Psoas muscle (tissue), 8 donors: ENCODE measurements at regions of chr22 and their contacts with region 1.

Region 1: GRCh38 chr22:28917747-28918549 is 34.6 kb downstream of the ZNRF3 start:
- DNase-seq: no peak
- ATAC-seq: peak; percentile 71 to 81 (median 74)
- H3K4me3 ChIP-seq: peak overlapping the region; percentile 28
- H3K27ac ChIP-seq: peak overlapping the region; percentile 74
- H3K4me1 ChIP-seq: peaks cover 25% of the 10 kb centered on the region
- H3K27me3 ChIP-seq: no peaks in the 10 kb centered on the region
- CTCF ChIP-seq: no peak

Region 2: DNA sequence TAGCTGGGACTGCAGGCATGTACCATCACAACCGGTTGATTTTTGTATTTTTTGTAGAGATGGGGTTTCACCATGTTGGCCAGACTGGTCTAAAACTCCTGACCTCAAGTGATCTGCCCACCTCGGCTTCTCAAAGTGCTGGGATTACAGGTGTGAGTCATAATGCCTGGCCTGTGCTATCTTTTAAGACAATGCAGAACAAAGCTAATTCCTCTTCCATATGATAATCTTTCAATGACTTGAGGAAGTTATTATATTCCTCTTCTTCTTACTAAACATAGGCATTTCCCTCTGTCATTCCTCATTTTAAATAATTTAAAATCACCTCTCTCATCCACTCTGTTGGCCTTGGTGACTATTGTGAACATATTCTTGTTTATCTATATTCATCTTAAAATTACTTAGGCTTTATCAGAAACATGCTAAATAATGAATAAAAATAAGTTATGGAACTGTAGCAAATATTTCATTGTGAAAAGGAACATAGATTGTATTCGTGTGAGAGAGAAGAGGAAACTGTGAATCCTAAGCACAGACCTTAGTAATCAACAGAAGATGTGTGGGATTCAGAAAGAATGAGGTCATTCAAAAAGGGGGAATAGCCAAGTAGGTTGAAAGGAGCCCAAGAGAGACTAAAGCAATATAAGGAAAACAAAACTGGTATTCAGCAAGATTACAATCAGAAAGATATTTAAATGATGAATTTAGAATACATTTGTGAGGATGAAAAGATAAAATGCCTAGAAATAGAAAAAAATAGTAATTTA is 507.7 kb before region 1 on chr22:
- intact Hi-C with region 1: no loop called
- DNase-seq: no peak
- ATAC-seq: no peak
- H3K4me3 ChIP-seq: no peak overlapping the region
- H3K27ac ChIP-seq: no peak overlapping the region
- H3K4me1 ChIP-seq: peaks cover 39% of the 10 kb centered on the region
- H3K27me3 ChIP-seq: no peaks in the 10 kb centered on the region
- CTCF ChIP-seq: no peak

Region 3: DNA sequence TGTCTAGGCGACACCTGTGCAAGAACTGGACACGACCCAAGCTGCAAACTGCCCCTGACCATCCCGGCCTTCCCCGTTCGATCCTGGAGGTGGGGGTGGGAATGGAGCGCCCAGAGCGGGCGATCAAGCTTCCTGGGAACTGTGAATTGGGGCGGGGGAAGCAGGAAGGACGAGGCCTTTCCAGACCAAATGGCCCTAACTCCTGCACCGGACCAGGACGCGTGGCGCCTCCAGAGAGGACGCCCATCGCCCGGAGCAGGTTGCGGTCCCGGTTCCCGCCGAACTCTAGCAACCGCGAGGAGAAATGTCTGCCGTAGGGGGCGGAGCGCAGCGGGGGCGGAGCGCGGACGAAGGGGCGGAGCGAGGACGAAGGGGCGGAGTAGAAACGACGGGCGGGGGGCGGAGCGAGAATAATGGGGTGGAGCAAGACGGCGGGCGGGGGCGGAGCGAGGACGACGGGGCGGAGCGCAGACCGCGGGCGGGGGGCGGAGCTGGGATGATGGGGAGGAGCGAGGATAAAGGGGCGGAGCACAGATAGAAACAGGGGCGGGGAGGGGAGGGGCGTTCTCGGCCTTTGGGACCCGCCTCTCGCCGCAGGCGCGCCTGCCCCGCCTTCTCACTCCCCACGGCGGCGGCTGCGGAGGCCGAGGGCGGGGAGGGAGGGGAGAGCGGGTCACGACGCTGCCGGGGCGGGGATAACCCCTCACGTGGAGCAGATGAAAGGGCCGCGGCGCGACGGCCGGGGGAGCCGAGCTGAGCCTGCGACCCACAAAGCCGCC is 34.9 kb before region 1 on chr22 and contains the start of gene ZNRF3:
- intact Hi-C with region 1: loop called in 1 of 2 experiments (anchors 1 kb)
- DNase-seq: peak; percentile 94 to 96
- ATAC-seq: peak; percentile 95 to 97 (median 96)
- H3K4me3 ChIP-seq: peak within 1 kb of the TSS; percentile 81
- H3K27ac ChIP-seq: peak within 1 kb of the TSS; percentile 83
- H3K4me1 ChIP-seq: peaks cover 29% of the 10 kb centered on the region
- H3K27me3 ChIP-seq: no peaks in the 10 kb centered on the region
- CTCF ChIP-seq: no peak
- total RNA-seq, gene ZNRF3: 4.9 to 8.5 (median 7.4) TPM